ENCODE measurements at regions of chr17 and their contacts with region 1.

Region 1: GRCh38 chr17:61568219-61569072 is 22.6 kb downstream of the NACA2 start:
- DNase-seq: peak; percentile 17 to 98
- H3K4me3 ChIP-seq: no peak overlapping the region
- H3K27ac ChIP-seq: peak overlapping the region; percentile 96
- H3K4me1 ChIP-seq: peaks cover 35% of the 10 kb centered on the region
- H3K27me3 ChIP-seq: no peaks in the 10 kb centered on the region
- CTCF ChIP-seq: no peak

Region 2: GRCh38 chr17:61461967-61462718 is 106.3 kb before region 1 on chr17:
- CTCF ChIA-PET with region 1: no interaction called
- POLR2A ChIA-PET with region 1: interaction called, 35 read pairs
- intact Hi-C with region 1: no loop called
- DNase-seq: no peak
- H3K4me3 ChIP-seq: no peak overlapping the region
- H3K27ac ChIP-seq: no peak overlapping the region
- H3K4me1 ChIP-seq: no peaks in the 10 kb centered on the region
- H3K27me3 ChIP-seq: no peaks in the 10 kb centered on the region
- CTCF ChIP-seq: no peak

Region 3: DNA sequence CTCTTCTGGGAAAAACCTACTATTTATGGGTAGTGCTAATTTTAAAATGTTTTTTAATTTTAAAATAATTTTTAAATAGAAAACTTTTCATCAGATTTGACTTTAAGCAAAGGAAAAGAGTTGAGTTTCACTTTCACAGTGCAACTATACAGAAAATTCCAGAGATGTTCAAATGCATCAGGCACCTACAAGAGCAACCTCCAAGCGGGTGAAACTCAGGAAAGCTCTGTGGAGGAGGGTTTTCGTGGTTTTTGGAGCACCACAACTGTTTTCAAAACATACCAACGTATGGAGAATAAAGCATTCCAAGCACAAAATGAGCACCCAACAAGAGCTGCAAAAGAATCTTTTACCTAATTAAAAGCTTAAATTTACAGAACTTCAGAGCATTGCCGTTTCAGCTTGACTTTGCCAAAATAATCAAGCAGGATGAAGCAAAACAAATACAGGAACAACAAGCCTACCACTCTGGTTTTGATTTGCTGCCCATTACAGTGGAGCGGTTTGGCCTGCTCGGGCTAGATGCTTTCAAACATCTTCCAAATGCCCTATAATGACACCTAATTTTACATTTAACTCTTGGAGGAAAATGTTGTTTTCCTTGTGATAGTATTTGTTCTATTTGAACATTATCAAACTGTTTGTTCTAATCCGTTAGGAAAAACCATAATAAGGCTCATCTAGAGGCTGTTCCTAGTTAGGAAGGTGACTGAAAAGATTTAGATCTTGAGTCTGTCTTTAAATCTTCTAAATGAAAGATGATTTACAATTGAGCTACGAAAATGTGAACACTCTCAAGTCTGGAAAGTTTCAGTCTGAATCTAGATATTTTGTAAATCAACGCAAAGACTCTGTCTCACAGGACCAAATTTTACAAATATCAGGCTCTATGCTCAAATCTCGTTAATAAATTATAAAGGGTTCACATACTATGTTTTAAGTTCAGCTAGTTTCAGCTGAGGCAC is 11.9 kb before region 1 on chr17:
- CTCF ChIA-PET with region 1: no interaction called
- POLR2A ChIA-PET with region 1: no interaction called
- intact Hi-C with region 1: loop called (anchors 1 kb)
- DNase-seq: peak in 1 of 2 experiments; percentile 27
- H3K4me3 ChIP-seq: 0 out of 2 replicates have a peak overlapping the region, but pooled peaks have one; percentile 21
- H3K27ac ChIP-seq: peak overlapping the region; percentile 40
- H3K4me1 ChIP-seq: peaks cover 26% of the 10 kb centered on the region
- H3K27me3 ChIP-seq: no peaks in the 10 kb centered on the region
- CTCF ChIP-seq: no peak

Region 4: DNA sequence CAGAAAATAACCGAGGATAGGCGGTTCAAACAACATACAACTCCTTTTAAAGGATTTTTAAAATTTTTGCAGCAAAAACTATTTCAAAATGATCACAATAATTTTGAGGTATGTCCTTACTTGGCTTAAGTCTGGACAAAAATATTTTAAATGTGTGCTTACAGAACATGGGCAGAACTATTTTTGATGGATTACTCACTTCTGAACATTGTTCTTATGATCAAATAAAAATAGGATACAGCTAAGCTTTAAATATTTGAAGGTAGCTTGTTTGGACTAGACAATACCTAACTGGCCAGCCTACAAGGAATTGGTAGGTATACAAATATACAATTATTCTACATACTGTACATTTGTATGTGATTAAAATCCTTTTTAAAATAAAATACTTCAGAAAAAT is 373.6 kb after region 1 on chr17:
- CTCF ChIA-PET with region 1: no interaction called
- POLR2A ChIA-PET with region 1: no interaction called
- intact Hi-C with region 1: no loop called
- DNase-seq: no peak
- H3K4me3 ChIP-seq: no peak overlapping the region
- H3K27ac ChIP-seq: no peak overlapping the region
- H3K4me1 ChIP-seq: no peaks in the 10 kb centered on the region
- H3K27me3 ChIP-seq: no peaks in the 10 kb centered on the region
- CTCF ChIP-seq: no peak

Measured in PC-9 (cell line).